Dorsolateral prefrontal cortex (tissue), 120 donors: ENCODE measurements at regions of chr10 and their contacts with region 1.

Region 1: GRCh38 chr10:15168781-15169554 is 475 bp upstream of the NMT2 start:
- DNase-seq: peak; percentile 91 to 97 (median 94)
- H3K4me3 ChIP-seq: peak overlapping the region in 53 of 59 donors; percentile 3 to 99 (median 42)
- H3K27ac ChIP-seq: peak overlapping the region in 53 of 59 donors; percentile 7 to 88 (median 70)
- H3K27me3 ChIP-seq: no peaks in the 10 kb centered on the region
- CTCF ChIP-seq: no peak

Region 2: DNA sequence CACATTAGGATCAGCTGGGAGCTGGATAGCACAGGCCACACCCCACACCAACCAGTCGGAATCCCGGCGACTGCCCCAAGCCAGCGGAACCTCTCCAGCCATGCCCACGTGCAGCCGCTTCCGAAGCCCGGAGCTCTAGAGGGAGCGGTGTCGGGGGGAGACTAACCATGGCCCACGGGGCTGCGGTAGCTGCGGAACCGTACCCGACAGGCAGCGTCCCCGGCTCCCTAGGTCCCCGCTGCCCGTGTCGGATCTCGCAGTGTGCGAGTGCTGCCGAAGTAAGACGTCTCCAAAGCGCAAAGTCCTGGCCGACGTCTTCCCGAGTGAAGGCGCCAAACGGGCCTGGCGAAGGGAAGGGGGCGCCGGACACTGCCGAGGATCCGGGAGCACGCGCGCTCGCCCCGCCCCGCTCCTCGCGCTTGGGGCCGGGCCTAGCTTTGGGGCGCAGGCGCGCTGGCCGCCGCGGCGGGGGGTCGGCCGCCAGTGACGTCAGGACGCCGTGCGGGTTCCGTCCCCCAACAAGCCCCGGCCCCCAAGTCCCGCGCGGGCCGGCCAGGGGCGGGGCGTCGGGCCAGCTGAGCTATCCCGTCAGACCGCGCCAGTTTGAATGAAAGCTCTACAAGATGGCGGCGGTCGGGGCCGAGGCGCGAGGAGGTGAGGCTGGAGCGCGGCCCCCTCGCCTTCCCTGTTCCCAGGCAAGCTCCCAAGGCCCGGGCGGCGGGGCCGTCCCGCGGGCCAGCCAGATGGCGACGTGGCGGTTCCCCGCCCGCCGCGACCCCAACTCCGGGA is 290.5 kb before region 1 on chr10 and contains the start of gene SUV39H2:
- intact Hi-C with region 1: loop called in 1 of 2 experiments (anchors 5 kb)
- DNase-seq: peak; percentile 89 to 98 (median 95)
- H3K4me3 ChIP-seq: peak within 1 kb of the TSS; percentile 67 to 99 (median 94)
- H3K27ac ChIP-seq: peak within 1 kb of the TSS; percentile 2 to 97 (median 92)
- H3K27me3 ChIP-seq: no peaks in the 10 kb centered on the region
- CTCF ChIP-seq: peak in 47 of 56 donors; percentile 12 to 71 (median 45)
- total RNA-seq, gene SUV39H2: 8.9 to 25.2 (median 16.2) TPM

Region 3: GRCh38 chr10:14959276-14960057 is 209.5 kb before region 1 on chr10 and contains the start of gene MEIG1:
- intact Hi-C with region 1: loop called (anchors 5 kb)
- DNase-seq: peak; percentile 90 to 98 (median 96)
- H3K4me3 ChIP-seq: peak within 1 kb of the TSS; percentile 64 to 98 (median 86)
- H3K27ac ChIP-seq: peak within 1 kb of the TSS; percentile 82 to 99 (median 96)
- H3K27me3 ChIP-seq: no peaks in the 10 kb centered on the region
- CTCF ChIP-seq: peak in 13 of 56 donors; percentile 4 to 45 (median 15)
- total RNA-seq, gene MEIG1: 0.68 to 5.1 (median 1.8) TPM in 75 of 120 experiments, not detected in the others

Region 4: GRCh38 chr10:15106352-15107013 is 62.5 kb before region 1 on chr10:
- intact Hi-C with region 1: loop called in 1 of 2 experiments (anchors 10 kb)
- DNase-seq: peak; percentile 50 to 83 (median 64)
- H3K4me3 ChIP-seq: no peak overlapping the region
- H3K27ac ChIP-seq: peak overlapping the region in 1 of 59 donors; percentile 3
- H3K27me3 ChIP-seq: no peaks in the 10 kb centered on the region
- CTCF ChIP-seq: peak; percentile 67 to 92 (median 83)

Region 5: DNA sequence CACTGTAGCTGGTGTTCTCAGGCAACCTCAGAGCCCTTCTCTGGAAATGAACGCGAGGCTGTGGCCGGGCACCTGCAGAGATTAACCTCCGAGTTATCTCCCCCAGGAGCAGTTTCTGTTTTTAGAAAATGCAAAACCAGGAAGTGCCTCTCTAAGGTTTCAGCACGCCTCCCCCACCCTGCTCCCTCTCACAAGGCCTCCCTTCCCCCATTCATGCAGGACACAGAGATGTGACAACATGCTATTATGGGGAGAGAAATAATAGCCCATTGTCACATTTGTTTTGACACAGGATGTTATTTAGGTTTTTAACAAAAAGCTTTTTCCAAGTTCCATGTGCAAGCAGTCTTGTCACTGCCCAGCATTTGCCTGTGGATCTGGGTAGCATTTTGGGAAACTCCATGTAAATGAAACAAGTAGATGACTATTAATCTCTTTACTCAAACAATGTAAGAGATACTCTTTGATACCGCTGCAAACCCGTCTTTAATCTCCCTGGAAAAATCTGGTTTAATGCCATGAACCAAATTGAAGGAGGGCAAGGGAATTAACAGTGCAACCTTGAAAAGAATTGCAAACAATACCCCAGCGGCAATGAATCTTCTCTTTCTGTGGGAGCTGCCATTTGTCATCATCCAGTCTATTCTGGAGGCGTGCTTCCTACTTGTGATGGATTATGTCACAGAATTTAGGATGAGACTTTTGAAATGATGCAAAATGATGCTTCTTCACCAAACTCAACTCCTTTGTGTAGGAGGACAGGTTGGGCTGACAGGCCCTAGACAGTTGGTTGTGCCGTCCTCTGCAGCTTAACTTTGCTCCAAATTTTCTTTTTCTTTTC is 86.1 kb after region 1 on chr10:
- intact Hi-C with region 1: loop called in 1 of 2 experiments (anchors 5 kb)
- DNase-seq: peak in 5 of 10 donors; percentile 43 to 76 (median 49)
- H3K4me3 ChIP-seq: peak overlapping the region; percentile 4 to 75 (median 52)
- H3K27ac ChIP-seq: peak overlapping the region; percentile 48 to 95 (median 88)
- H3K27me3 ChIP-seq: no peaks in the 10 kb centered on the region
- CTCF ChIP-seq: peak in 6 of 56 donors; percentile 11 to 22 (median 14)

Region 6: DNA sequence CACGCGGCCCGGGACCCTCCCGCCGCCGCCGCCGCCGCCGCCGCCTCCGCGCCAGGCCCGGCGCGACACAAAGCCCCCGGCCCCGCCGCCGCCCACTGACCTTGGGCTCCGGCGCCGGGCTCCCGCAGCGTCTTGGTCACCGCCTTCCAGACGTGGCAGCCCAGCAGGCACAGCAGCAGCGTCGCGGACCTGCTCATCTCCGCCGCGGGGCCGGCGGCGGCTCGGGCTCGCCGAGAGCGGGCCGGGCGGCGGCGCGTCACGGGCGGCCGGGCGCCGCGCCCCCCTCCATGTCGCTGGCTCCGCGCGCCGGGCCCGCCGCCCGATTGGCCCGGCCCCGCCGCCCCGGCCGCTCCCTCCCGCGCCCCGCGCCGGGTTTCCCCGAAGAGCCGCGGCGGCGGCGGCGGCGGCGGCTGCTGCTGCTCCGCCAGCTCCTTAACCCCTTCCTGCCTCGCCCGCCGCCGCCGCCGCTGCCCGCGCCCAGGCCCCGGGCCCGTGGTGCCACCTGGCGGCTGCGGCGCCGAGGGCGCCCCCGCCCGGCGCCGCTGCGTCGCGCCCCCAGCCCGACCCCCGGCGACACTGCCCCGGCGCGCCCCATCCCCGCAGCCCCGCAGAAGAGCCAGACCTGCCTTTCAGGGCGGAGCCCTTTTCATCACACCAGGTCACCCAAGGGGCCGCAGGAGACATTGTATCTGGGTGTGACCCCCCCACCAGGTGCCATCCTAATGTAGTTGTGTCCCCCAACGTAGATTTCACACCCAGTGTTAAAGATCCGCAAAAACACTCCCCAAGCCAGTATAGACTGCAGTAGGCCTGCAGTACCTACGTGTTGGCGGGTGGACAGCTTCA is 202.1 kb after region 1 on chr10 and contains the start of gene FAM171A1:
- intact Hi-C with region 1: loop called (anchors 5 kb)
- DNase-seq: peak in 8 of 10 donors; percentile 24 to 69 (median 62)
- H3K4me3 ChIP-seq: peak within 1 kb of the TSS; percentile 52 to 92 (median 80)
- H3K27ac ChIP-seq: peak within 1 kb of the TSS in 58 of 59 donors; percentile 40 to 94 (median 85)
- H3K27me3 ChIP-seq: no peaks in the 10 kb centered on the region
- CTCF ChIP-seq: peak in 20 of 56 donors; percentile 6 to 56 (median 22)
- total RNA-seq, gene FAM171A1: 79.2 to 197 (median 110) TPM